ENCODE measurements at regions of chr13 and their contacts with region 1.

Region 1: DNA sequence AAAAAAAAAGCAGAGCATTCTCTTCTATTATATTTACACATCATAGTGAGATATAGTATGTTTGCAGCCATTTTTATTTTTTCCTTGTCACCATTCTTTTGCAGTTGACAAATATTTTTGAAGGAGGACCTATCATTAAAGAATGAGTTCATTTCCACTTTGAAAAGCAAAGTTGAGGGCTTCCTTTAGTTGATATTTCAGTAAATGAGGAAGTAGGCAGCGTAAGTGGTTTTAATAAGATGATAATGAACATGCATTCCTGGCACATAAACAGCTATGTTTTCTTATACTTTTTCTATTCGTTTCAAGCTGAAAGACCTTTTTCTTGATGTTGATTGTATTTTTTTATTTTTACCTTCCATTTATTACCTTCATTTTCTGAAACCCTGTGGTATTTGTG is 66.2 kb downstream of the ZMYM2 start:
- DNase-seq: no peak
- ATAC-seq: no peak
- H3K4me3 ChIP-seq: no peak overlapping the region
- H3K27ac ChIP-seq: no peak overlapping the region
- H3K4me1 ChIP-seq: no peaks in the 10 kb centered on the region
- H3K27me3 ChIP-seq: no peaks in the 10 kb centered on the region
- CTCF ChIP-seq: no peak

Region 2: GRCh38 chr13:18232298-18232993 is 1792.3 kb before region 1 on chr13:
- intact Hi-C with region 1: no loop called
- DNase-seq: no peak
- ATAC-seq: no peak
- H3K4me3 ChIP-seq: no peak overlapping the region
- H3K27ac ChIP-seq: no peak overlapping the region
- H3K4me1 ChIP-seq: no peaks in the 10 kb centered on the region
- H3K27me3 ChIP-seq: no peaks in the 10 kb centered on the region
- CTCF ChIP-seq: no peak

Region 3: GRCh38 chr13:20035130-20035529 is 10.4 kb after region 1 on chr13:
- intact Hi-C with region 1: loop called in 1 of 2 experiments (anchors 1 kb)
- DNase-seq: no peak
- ATAC-seq: no peak
- H3K4me3 ChIP-seq: no peak overlapping the region
- H3K27ac ChIP-seq: no peak overlapping the region
- H3K4me1 ChIP-seq: no peaks in the 10 kb centered on the region
- H3K27me3 ChIP-seq: no peaks in the 10 kb centered on the region
- CTCF ChIP-seq: no peak

Region 4: GRCh38 chr13:20247403-20247802 is 222.7 kb after region 1 on chr13:
- intact Hi-C with region 1: no loop called
- DNase-seq: no peak
- ATAC-seq: no peak
- H3K4me3 ChIP-seq: no peak overlapping the region
- H3K27ac ChIP-seq: no peak overlapping the region
- H3K4me1 ChIP-seq: no peaks in the 10 kb centered on the region
- H3K27me3 ChIP-seq: peaks cover 0 to 12% (median 1%) of the 10 kb centered on the region in 3 donors
- CTCF ChIP-seq: no peak